GM10248 (cell line): ENCODE measurements at regions of chr6 and their contacts with region 1.

Region 1: GRCh38 chr6:100084291-100084953 is 90.4 kb upstream of the MCHR2 start:
- DNase-seq: no peak
- CTCF ChIP-seq: no peak

Region 2: DNA sequence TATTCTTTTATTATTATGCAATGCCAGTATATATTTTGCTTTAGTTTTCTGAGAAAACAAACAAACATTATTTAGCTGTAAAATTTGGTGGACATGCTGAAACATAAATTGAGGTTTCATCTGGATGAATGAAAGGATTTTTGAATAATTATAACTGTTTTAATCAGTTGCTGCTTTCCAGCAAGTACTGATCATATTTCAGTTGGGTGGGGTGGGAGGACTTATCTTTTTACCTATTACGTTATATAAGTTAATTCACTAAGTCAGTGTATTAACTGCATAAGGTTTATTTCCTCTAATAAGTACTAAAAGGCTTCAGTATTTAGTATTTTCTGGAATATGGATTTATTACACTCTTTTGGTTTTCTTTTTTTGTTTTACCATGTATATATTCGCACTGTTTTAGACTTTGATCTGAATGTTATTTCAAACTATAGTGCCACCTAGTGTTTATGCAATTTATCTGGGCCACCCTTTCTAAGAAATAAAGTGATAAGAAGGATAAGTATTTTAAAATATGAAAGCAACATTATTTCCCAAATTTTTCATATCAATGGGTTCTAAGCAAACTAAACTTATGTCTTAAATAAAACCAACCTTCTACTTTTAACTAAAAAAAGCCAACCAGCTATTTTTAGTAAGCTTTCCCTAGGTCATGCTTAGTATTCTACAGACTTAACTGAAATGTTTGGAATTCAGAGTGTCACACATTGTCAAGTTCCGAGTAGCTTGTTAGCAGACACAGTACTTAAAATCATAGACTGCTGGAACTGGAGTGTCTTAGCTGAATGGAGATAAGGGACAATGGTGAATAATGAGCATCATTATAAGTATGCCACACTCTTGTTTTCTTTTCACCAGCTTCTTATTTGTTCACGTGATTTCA is 15.0 kb after region 1 on chr6:
- CTCF ChIA-PET with region 1: interaction called, 16 read pairs
- POLR2A ChIA-PET with region 1: no interaction called
- DNase-seq: peak; percentile 22
- CTCF ChIP-seq: peak; percentile 45